ENCODE measurements at regions of chr7 and their contacts with region 1.

Region 1: GRCh38 chr7:134646425-134647305 is at the start of gene BPGM:
- DNase-seq: peak; percentile 82
- ATAC-seq: peak; percentile 95
- H3K4me3 Mint-ChIP-seq: no peak within 1 kb of the TSS
- H3K27ac Mint-ChIP-seq: no peak within 1 kb of the TSS
- H3K4me1 Mint-ChIP-seq: peaks cover 19% of the 10 kb centered on the region
- H3K27me3 Mint-ChIP-seq: no peaks in the 10 kb centered on the region
- CTCF ChIP-seq: peak; percentile 22
- total RNA-seq, gene BPGM: 10.1 and 10.2 TPM in 2 replicates

Region 2: DNA sequence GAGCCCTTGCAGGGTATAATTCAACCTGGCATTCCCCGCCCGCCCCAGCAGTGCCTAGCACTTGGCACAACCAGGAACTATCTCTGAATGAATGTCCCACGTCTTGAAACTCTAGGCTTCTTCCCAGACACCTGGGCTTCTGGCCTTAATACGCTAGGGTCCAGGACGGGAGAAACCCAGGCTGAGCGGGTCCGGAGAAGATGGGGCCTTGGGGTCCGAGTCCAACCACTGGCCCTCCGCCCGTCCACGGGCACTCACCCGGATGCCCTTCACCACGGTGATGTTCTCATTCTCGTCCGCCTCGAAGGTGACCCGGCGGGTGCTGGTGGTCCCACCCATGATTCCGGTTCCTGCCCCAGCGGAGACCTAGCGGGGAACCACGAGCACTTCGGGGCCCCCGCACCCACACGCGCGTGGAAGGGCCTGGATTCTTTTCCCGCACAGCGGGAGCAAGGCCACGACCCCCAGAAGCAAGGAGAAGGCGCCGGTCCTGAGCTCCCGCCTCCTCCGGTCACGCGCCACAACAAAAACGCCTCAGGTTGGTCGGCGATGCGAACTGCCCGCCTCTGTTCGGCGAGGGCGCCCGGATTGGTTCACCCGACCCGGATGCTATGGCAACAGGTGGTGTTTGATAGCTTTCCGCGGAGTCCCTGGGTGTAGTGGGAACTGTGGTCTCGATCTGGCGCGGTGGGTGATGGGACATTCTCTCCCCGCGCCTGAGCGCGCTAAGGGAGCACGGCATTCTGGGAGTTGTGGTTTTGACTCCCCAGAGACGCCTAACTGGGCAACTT is 1564.9 kb before region 1 on chr7 and contains the start of gene CHCHD3:
- CTCF ChIA-PET with region 1: no interaction called
- POLR2A ChIA-PET with region 1: no interaction called
- intact Hi-C with region 1: loop called (anchors 2 kb)
- DNase-seq: peak; percentile 91
- ATAC-seq: peak; percentile 98
- H3K4me3 Mint-ChIP-seq: peak within 1 kb of the TSS; percentile 94
- H3K27ac Mint-ChIP-seq: peak within 1 kb of the TSS; percentile 94
- H3K4me1 Mint-ChIP-seq: peaks cover 30% of the 10 kb centered on the region
- H3K27me3 Mint-ChIP-seq: no peaks in the 10 kb centered on the region
- CTCF ChIP-seq: no peak
- total RNA-seq, gene CHCHD3: 53.6 and 56.3 TPM in 2 replicates

Region 3: DNA sequence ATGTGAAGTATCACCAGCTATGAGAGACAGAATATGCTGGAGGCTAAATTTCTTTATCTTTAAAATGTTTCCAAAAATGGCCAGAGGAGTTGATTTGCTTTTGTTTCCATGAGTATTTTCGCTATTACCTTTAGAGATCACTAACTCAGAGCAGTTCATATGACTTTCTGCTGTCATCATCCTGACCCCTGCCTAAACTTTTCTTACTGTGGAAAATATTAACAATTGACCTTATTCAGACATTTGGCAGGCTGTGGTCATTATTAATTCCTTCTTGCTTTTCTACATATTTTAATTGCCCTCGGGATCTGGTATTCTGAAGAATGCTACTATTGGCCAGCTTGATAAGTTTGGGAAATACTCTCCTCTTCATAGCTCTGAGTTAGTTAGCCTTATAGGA is 1237.2 kb before region 1 on chr7:
- CTCF ChIA-PET with region 1: no interaction called
- POLR2A ChIA-PET with region 1: no interaction called
- intact Hi-C with region 1: no loop called
- DNase-seq: no peak
- ATAC-seq: no peak
- H3K4me3 Mint-ChIP-seq: no peak overlapping the region
- H3K27ac Mint-ChIP-seq: no peak overlapping the region
- H3K4me1 Mint-ChIP-seq: no peaks in the 10 kb centered on the region
- H3K27me3 Mint-ChIP-seq: no peaks in the 10 kb centered on the region
- CTCF ChIP-seq: no peak

Region 4: GRCh38 chr7:134432296-134433152 is 214.1 kb before region 1 on chr7:
- CTCF ChIA-PET with region 1: no interaction called
- POLR2A ChIA-PET with region 1: interaction called, 10 read pairs
- intact Hi-C with region 1: loop called (anchors 1 kb)
- DNase-seq: peak; percentile 56
- ATAC-seq: peak; percentile 89
- H3K4me3 Mint-ChIP-seq: peak overlapping the region; percentile 82
- H3K27ac Mint-ChIP-seq: peak overlapping the region; percentile 82
- H3K4me1 Mint-ChIP-seq: peaks cover 20% of the 10 kb centered on the region
- H3K27me3 Mint-ChIP-seq: no peaks in the 10 kb centered on the region
- CTCF ChIP-seq: no peak

Region 5: GRCh38 chr7:134669845-134670373 is 23.2 kb after region 1 on chr7:
- CTCF ChIA-PET with region 1: no interaction called
- POLR2A ChIA-PET with region 1: interaction called, 4 read pairs
- intact Hi-C with region 1: loop called (anchors 1 kb)
- DNase-seq: peak; percentile 18
- ATAC-seq: peak; percentile 71
- H3K4me3 Mint-ChIP-seq: peak overlapping the region; percentile 57
- H3K27ac Mint-ChIP-seq: peak overlapping the region; percentile 65
- H3K4me1 Mint-ChIP-seq: peaks cover 25% of the 10 kb centered on the region
- H3K27me3 Mint-ChIP-seq: no peaks in the 10 kb centered on the region
- CTCF ChIP-seq: no peak

Region 6: DNA sequence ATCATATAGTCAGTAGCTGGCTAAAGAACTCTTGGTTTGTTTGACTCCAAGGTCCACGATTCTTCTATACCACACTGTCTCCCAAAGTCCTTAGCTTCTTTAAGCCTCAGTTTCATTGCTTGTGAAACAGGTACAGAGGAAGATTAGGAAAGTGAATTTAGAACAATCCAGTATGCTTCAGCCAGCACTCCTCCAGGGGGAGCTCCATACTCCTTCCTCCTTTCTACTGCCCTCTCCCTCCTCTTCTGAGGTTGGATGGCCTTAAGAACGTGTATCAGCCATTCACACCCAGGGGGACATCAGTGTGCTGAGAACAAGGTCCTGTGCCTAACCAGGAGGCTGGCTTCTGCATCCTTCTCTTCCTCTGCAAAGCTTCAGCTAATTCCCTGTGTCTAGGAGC is 77.9 kb after region 1 on chr7:
- CTCF ChIA-PET with region 1: no interaction called
- POLR2A ChIA-PET with region 1: no interaction called
- intact Hi-C with region 1: no loop called
- DNase-seq: no peak
- ATAC-seq: no peak
- H3K4me3 Mint-ChIP-seq: no peak overlapping the region
- H3K27ac Mint-ChIP-seq: no peak overlapping the region
- H3K4me1 Mint-ChIP-seq: no peaks in the 10 kb centered on the region
- H3K27me3 Mint-ChIP-seq: no peaks in the 10 kb centered on the region
- CTCF ChIP-seq: no peak

Region 7: DNA sequence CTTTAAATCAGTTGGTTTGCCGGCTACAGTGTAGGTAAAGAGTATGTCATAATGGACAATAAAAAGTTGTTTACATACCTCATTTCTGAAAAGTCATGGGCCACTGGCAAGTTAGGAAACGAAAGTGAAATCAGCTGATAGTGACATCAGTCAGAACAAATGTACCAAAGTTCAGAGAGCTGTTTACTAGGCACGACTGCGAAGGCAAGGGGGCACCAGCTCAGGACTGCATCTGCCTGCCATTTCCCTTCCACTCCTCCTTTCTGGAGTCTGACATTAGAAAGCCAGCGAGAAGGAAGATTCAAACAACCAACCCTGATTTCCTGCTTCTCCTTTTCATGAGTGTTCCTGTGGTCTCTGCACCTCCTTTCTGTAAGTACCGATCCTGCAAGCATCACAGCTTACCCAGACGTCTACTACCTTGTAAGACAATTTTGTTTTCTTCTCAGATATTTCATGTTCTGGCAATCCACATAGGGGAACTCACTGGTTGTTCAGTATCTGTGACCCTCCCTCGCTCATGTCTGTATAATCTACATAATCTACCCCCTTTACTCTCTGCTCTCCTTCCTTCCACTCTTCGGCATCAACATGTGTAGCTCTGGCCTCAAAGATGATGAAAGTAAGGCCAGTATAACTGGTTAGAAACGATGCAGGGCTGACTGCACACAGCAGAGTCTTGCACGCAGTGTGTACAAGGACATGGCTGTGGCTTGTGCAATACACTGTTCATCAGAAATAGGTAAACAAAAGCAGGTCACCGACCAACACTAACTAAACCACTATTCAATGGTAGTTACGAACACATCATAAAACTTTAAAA is 501.4 kb after region 1 on chr7 and contains the start of gene TMEM140:
- CTCF ChIA-PET with region 1: no interaction called
- POLR2A ChIA-PET with region 1: interaction called, 9 read pairs
- intact Hi-C with region 1: loop called (anchors 1 kb)
- DNase-seq: no peak
- ATAC-seq: peak; percentile 72
- H3K4me3 Mint-ChIP-seq: peak within 1 kb of the TSS; percentile 83
- H3K27ac Mint-ChIP-seq: peak within 1 kb of the TSS; percentile 93
- H3K4me1 Mint-ChIP-seq: peaks cover 73% of the 10 kb centered on the region
- H3K27me3 Mint-ChIP-seq: no peaks in the 10 kb centered on the region
- CTCF ChIP-seq: no peak
- total RNA-seq, gene TMEM140: 18.6 and 20.9 TPM in 2 replicates

Region 8: DNA sequence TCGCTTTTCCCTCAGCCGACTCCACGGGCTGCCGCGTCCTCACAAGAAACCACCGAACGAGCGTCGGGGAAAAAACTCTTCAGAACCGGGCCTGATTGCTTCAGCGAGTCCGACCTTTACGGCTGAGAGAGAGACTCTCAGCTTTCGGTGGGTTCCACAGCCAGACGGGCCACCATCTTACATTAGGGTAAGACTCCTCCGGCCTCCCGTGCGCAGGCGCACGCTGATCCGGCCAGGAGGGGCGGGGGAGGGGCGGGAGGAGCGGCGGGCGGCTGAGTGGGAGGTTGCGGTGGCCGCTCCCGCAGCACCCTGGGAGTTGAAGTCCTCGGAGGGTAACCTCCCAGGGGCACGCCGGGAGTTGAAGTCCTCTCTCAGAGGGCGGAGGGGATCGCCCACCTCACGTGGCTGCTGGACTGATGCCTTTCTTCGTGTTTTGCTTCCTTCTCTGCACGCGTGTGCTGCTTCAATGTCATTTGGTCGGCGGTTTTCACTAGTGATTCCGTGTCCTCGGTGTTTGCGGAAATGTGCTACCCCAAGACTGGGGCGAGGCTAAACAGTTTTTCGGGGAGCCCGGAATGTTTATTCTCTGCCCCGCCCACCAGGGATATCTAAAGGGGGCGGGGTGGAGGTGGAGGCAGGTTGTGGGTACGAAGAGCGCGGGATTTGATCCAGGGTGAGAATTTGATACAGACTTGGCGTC is 863.4 kb after region 1 on chr7 and contains the start of gene CNOT4:
- CTCF ChIA-PET with region 1: no interaction called
- POLR2A ChIA-PET with region 1: interaction called, 3 read pairs
- intact Hi-C with region 1: loop called (anchors 1 kb)
- DNase-seq: peak; percentile 87
- ATAC-seq: peak; percentile 96
- H3K4me3 Mint-ChIP-seq: no peak within 1 kb of the TSS
- H3K27ac Mint-ChIP-seq: no peak within 1 kb of the TSS
- H3K4me1 Mint-ChIP-seq: peaks cover 10% of the 10 kb centered on the region
- H3K27me3 Mint-ChIP-seq: no peaks in the 10 kb centered on the region
- CTCF ChIP-seq: no peak
- total RNA-seq, gene CNOT4: 34.4 and 36.8 TPM in 2 replicates